Left ventricle myocardium superior (tissue), 1 donor: ENCODE measurements at regions of chrX and their contacts with region 1.

Region 1: GRCh38 chrX:67563469-67564448 is 19.9 kb downstream of the AR start:
- DNase-seq: peak; percentile 33
- ATAC-seq: peak; percentile 89

Region 2: GRCh38 chrX:67317725-67318124 is 246.0 kb before region 1 on chrX:
- intact Hi-C with region 1: no loop called
- DNase-seq: no peak
- ATAC-seq: no peak

Region 3: DNA sequence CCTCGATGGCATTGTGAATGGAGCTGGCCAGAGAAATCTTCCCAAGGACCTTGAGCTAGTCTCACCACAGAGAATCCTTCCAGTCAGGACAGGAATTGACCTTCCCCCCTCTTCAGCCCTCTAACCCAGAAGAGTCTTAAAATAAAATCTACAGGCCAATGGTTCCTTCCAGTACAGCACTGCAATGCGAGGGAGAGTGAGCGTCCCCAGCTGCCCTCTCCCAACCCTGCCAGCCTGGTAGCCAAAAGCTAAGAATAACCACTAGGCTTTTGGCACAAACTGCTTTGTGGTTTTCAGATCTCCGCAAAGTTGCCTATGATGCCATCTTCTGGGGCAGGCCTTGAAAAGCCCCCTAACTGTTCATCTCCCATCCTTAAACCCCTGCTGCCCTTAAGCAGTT is 155.2 kb after region 1 on chrX:
- intact Hi-C with region 1: loop called (anchors 10 kb)
- DNase-seq: peak; percentile 44
- ATAC-seq: peak; percentile 93